Caco-2 (cell line): ENCODE measurements at regions of chr11 and their contacts with region 1.

Region 1: GRCh38 chr11:79670882-79671281 is 230.1 kb upstream of the TENM4 start:
- DNase-seq: peak; percentile 61 to 71
- H3K4me3 ChIP-seq: no peak overlapping the region
- H3K4me3 Mint-ChIP-seq: peak overlapping the region; percentile 15
- H3K27ac Mint-ChIP-seq: peak overlapping the region; percentile 61
- H3K4me1 ChIP-seq: peaks cover 19% of the 10 kb centered on the region
- H3K4me1 Mint-ChIP-seq: peaks cover 10% of the 10 kb centered on the region
- H3K27me3 ChIP-seq: no peaks in the 10 kb centered on the region
- H3K27me3 Mint-ChIP-seq: no peaks in the 10 kb centered on the region
- CTCF ChIP-seq: no peak

Region 2: GRCh38 chr11:79570104-79570503 is 100.8 kb before region 1 on chr11:
- CTCF ChIA-PET with region 1: no interaction called
- POLR2A ChIA-PET with region 1: no interaction called
- intact Hi-C with region 1: loop called (anchors 2 kb)
- DNase-seq: no peak
- H3K4me3 ChIP-seq: no peak overlapping the region
- H3K4me3 Mint-ChIP-seq: no peak overlapping the region
- H3K27ac Mint-ChIP-seq: no peak overlapping the region
- H3K4me1 ChIP-seq: peaks cover 29% of the 10 kb centered on the region
- H3K4me1 Mint-ChIP-seq: peaks cover 37% of the 10 kb centered on the region
- H3K27me3 ChIP-seq: no peaks in the 10 kb centered on the region
- H3K27me3 Mint-ChIP-seq: no peaks in the 10 kb centered on the region
- CTCF ChIP-seq: no peak